H1 (cell line): ENCODE measurements at regions of chr9 and their contacts with region 1.

Region 1: GRCh38 chr9:136488247-136489214 is 5.7 kb upstream of the SEC16A start:
- DNase-seq: peak; percentile 23 to 94
- H3K4me3 ChIP-seq: no peak overlapping the region
- H3K27ac ChIP-seq: no peak overlapping the region
- H3K4me1 ChIP-seq: peaks cover 0 to 7% (median 2%) of the 10 kb centered on the region in 4 experiments; a peak in 5 of 7 replicates
- H3K27me3 ChIP-seq: no peaks in the 10 kb centered on the region
- CTCF ChIP-seq: peak in 2 of 3 experiments; percentile 94 to 95; a peak in 3 of 4 replicates
- EP300 ChIP-seq: no peak
- POLR2A ChIP-seq: no peak
- RAD21 ChIP-seq: peak; percentile 94 to 95

Region 2: GRCh38 chr9:136502942-136503550 is 14.5 kb after region 1 on chr9:
- CTCF ChIA-PET with region 1: interaction called, 47 read pairs
- POLR2A ChIA-PET with region 1: interaction called, 6 read pairs
- DNase-seq: no peak
- H3K4me3 ChIP-seq: no peak overlapping the region
- H3K27ac ChIP-seq: no peak overlapping the region
- H3K4me1 ChIP-seq: no peaks in the 10 kb centered on the region
- H3K27me3 ChIP-seq: no peaks in the 10 kb centered on the region
- CTCF ChIP-seq: peak in 1 of 3 experiments; percentile 22; a peak in 1 of 4 replicates
- EP300 ChIP-seq: no peak
- POLR2A ChIP-seq: no peak
- RAD21 ChIP-seq: peak in 1 of 2 experiments; percentile 8; a peak in 1 of 4 replicates

Region 3: GRCh38 chr9:136527721-136528691 is 39.5 kb after region 1 on chr9:
- CTCF ChIA-PET with region 1: interaction called, 37 read pairs
- POLR2A ChIA-PET with region 1: interaction called, 3 read pairs
- DNase-seq: no peak
- H3K4me3 ChIP-seq: no peak overlapping the region
- H3K27ac ChIP-seq: no peak overlapping the region
- H3K4me1 ChIP-seq: peaks cover 0 to 24% (median 14%) of the 10 kb centered on the region in 4 experiments; a peak in 5 of 7 replicates
- H3K27me3 ChIP-seq: no peaks in the 10 kb centered on the region
- CTCF ChIP-seq: no peak
- EP300 ChIP-seq: no peak
- POLR2A ChIP-seq: no peak
- RAD21 ChIP-seq: no peak

Region 4: DNA sequence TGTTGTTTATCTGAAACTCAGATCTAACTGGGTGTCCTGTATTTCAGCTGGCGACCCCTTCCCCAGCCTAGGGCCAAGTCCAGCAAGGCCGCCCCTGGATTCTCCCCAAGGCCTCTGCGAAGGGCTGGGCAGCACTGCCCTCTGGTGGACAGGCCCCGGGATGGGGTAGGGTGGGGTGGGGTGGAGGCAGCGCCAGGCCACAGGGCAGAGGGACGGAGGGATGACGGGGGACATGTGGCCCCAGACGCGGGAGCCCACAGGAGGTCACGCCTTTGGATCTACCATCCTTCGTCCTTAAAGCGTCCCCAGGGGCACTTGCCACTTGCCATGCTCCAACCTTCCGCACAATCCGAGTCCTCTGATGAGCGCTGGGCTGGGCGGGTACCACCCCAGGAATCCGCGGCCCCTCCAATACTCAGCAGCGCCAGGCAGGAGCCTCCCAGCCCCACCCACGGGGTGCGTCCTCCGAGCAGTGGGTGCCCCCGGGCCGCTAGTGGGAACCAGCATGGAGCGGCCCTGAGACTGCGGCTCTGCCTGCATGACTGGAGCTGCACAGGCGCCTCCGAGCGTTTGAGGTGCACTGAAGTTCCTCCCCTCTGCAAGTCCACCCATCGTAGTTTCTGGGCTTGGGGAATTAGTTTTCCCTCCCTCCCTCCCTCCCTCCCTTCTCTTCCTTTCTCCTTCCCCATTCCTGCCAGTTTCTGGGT is 205.9 kb after region 1 on chr9:
- CTCF ChIA-PET with region 1: interaction called, 12 read pairs
- POLR2A ChIA-PET with region 1: no interaction called
- DNase-seq: peak in 1 of 2 experiments; percentile 90
- H3K4me3 ChIP-seq: 0 out of 8 replicates have a peak overlapping the region, but pooled peaks of 1 of the 4 experiments have one; percentile 43
- H3K27ac ChIP-seq: no peak overlapping the region
- H3K4me1 ChIP-seq: peaks cover 0 to 16% (median 12%) of the 10 kb centered on the region in 4 experiments; a peak in 4 of 7 replicates
- H3K27me3 ChIP-seq: no peaks in the 10 kb centered on the region
- CTCF ChIP-seq: peak in 2 of 3 experiments; percentile 79 to 89; a peak in 3 of 4 replicates
- EP300 ChIP-seq: no peak
- POLR2A ChIP-seq: no peak
- RAD21 ChIP-seq: peak; percentile 81 to 89

Region 5: GRCh38 chr9:136734837-136735496 is 246.4 kb after region 1 on chr9:
- CTCF ChIA-PET with region 1: no interaction called
- POLR2A ChIA-PET with region 1: no interaction called
- DNase-seq: no peak
- H3K4me3 ChIP-seq: no peak overlapping the region
- H3K27ac ChIP-seq: no peak overlapping the region
- H3K4me1 ChIP-seq: no peaks in the 10 kb centered on the region; a peak in 1 of 7 replicates
- H3K27me3 ChIP-seq: no peaks in the 10 kb centered on the region; a peak in 1 of 7 replicates
- CTCF ChIP-seq: no peak
- EP300 ChIP-seq: no peak
- POLR2A ChIP-seq: no peak
- RAD21 ChIP-seq: no peak